ENCODE measurements at regions of chr3 and their contacts with region 1.

Region 1: GRCh38 chr3:58299839-58300516 is 6.1 kb upstream of the RPP14 start:
- DNase-seq: peak; percentile 24

Region 2: DNA sequence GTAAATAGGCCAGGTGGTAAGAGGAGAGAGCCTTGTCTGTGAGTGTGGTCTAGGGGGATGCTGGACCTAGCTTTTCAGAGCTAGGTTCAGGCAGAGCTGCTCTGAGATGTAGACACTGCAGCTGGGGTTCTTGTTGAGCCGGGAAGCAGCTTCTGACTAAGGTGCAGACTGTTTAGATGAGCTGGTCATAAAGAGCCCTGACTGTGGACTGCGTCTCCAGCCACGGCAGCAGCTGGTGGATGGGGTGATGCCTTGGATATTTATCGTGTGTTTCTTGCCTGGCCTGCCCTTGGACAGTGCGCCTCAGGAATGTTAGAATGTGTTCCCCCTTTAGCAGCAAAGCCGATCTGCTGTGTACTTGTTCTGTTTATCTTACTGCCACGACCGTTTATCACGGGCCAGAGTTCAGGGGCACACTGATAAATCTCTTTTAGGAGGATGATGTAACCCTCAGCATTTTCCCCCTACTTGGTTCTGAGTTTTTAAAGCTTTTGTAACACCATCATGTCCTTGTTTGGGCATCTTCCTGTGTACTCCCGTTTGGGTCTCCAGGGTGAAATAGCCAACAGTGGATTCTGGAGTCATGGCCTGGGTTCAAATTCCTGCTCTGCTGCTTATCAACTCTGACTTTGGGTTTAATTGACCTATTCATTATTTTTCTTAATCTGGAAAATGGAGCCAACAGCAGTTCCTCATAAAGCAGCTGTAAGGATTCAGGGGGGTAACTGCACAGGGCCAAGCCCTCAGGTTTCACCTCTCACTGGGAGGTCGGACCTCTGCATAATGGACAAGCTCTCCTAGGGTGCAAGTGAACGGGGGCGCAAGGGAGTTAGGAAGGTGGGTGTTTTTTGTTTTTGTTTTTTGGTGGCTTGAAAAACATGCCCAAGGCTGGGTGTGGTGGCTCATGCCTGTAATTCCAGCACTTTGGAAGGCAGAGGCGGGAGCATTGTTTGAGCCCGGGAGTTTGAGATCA is 240.3 kb before region 1 on chr3:
- in situ Hi-C with region 1: no loop called
- DNase-seq: no peak

Region 3: DNA sequence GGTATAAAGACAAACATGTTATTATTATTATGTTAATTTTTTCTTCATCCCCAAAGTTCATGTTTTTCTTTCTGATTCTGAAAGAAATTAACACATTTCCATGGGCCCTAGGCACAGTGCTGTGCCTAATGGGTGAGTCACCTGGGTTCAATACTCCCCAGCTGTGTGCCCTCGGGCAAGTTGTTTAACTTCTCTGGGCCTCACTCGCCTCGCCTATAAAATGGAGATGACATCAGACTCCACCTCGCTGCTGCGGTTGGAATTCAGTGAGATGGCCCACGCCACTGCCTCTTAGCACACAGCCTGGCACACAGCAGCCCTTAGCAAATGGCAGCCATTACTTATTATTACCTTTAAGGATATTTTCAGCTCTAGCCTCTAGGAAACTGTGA is 111.8 kb before region 1 on chr3:
- in situ Hi-C with region 1: loop called (anchors 10 kb)
- DNase-seq: no peak

Region 4: GRCh38 chr3:58388550-58389091 is 88.6 kb after region 1 on chr3:
- in situ Hi-C with region 1: no loop called
- DNase-seq: no peak